ENCODE measurements at regions of chr14 and their contacts with region 1.

Region 1: GRCh38 chr14:75709207-75709812 is 48.3 kb downstream of the TTLL5 start:
- DNase-seq: no peak
- H3K4me3 ChIP-seq: no peak overlapping the region
- H3K27ac ChIP-seq: no peak overlapping the region
- H3K4me1 ChIP-seq: peaks cover 10 to 22% (median 19%) of the 10 kb centered on the region in 4 donors
- H3K27me3 ChIP-seq: no peaks in the 10 kb centered on the region
- CTCF ChIP-seq: peak; percentile 79 to 86 (median 82)
- EP300 ChIP-seq: no peak
- POLR2A ChIP-seq: no peak

Region 2: DNA sequence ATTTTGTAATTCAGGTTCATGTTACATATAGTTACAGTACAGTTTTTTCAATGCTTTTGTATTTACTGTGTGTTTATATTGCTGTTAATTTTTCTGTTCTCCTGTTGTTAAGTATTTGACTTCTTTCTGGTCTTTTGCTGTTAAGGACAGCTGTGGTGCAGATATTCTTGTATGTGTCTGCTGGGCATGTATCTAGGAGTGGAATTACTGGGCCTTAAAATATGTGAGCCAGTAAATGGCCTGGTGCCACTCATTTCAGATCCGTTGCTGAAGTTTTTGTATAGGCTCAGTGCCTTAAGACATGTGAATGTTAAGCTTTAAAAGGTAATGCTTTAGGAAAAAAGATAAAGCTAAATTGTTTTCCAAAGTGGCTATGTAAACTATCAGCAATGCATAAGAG is 39.0 kb after region 1 on chr14:
- intact Hi-C with region 1: no loop called
- DNase-seq: no peak
- H3K4me3 ChIP-seq: no peak overlapping the region
- H3K27ac ChIP-seq: no peak overlapping the region
- H3K4me1 ChIP-seq: no peaks in the 10 kb centered on the region
- H3K27me3 ChIP-seq: no peaks in the 10 kb centered on the region
- CTCF ChIP-seq: no peak
- EP300 ChIP-seq: no peak
- POLR2A ChIP-seq: no peak

Region 3: GRCh38 chr14:75794615-75795038 is 85.3 kb after region 1 on chr14:
- intact Hi-C with region 1: loop called (anchors 5 kb)
- DNase-seq: no peak
- H3K4me3 ChIP-seq: no peak overlapping the region
- H3K27ac ChIP-seq: peak overlapping the region in 1 of 4 donors; percentile 33
- H3K4me1 ChIP-seq: peaks cover 0 to 12% (median 5%) of the 10 kb centered on the region in 4 donors
- H3K27me3 ChIP-seq: no peaks in the 10 kb centered on the region
- CTCF ChIP-seq: peak; percentile 51 to 62 (median 53)
- EP300 ChIP-seq: no peak
- POLR2A ChIP-seq: no peak

Region 4: GRCh38 chr14:75906676-75907280 is 197.5 kb after region 1 on chr14:
- intact Hi-C with region 1: loop called (anchors 5 kb)
- DNase-seq: peak; percentile 93
- H3K4me3 ChIP-seq: no peak overlapping the region
- H3K27ac ChIP-seq: peak overlapping the region in 3 of 4 donors; percentile 3 to 13 (median 4)
- H3K4me1 ChIP-seq: peaks cover 8 to 17% (median 11%) of the 10 kb centered on the region in 4 donors
- H3K27me3 ChIP-seq: no peaks in the 10 kb centered on the region
- CTCF ChIP-seq: peak; percentile 81 to 90 (median 86)
- EP300 ChIP-seq: no peak
- POLR2A ChIP-seq: no peak

Region 5: DNA sequence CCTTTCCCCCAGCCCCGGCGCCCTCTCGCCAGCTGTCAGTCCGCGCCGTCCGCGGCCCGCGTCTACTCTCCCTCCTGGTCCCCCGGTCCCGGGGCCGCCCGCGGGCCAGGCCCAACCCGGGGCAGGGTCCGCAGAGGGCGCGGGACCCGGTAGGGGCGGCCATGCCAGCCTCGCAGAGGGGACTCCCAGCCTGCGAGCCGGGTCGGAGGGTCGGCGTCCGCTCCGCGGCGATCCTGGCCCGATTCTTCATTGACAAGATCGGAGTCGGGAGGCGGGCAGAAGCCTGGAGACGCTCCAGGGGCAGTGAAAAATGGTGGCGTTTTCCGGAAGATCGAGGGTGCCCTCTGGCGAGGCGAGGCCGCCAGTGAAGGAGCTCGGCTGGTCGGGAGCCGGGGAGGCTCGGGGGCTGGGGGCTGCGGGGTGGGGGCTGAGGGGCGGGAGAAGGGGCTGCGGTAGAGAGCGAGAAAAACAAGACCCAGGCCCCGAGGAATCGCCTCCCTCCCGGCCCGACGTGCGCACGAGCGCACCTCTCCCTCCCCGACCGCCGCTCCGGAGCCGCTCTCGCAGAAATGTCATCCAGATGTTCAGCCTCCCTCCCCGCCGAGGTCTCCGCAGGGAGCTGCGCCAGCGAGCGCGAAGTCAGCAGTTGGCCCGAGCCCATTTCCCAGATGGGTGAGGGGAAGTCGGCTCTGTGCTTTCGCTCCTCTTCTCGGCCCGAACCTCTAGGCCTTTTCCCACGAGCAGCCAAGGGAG is 273.1 kb after region 1 on chr14:
- intact Hi-C with region 1: loop called (anchors 2 kb)
- DNase-seq: peak; percentile 98
- H3K4me3 ChIP-seq: peak overlapping the region; percentile 75 to 92 (median 80)
- H3K27ac ChIP-seq: peak overlapping the region; percentile 96 to 99 (median 98)
- H3K4me1 ChIP-seq: peaks cover 45 to 74% (median 71%) of the 10 kb centered on the region in 4 donors
- H3K27me3 ChIP-seq: no peaks in the 10 kb centered on the region
- CTCF ChIP-seq: peak; percentile 51 to 85 (median 80)
- EP300 ChIP-seq: no peak
- POLR2A ChIP-seq: no peak

Region 6: DNA sequence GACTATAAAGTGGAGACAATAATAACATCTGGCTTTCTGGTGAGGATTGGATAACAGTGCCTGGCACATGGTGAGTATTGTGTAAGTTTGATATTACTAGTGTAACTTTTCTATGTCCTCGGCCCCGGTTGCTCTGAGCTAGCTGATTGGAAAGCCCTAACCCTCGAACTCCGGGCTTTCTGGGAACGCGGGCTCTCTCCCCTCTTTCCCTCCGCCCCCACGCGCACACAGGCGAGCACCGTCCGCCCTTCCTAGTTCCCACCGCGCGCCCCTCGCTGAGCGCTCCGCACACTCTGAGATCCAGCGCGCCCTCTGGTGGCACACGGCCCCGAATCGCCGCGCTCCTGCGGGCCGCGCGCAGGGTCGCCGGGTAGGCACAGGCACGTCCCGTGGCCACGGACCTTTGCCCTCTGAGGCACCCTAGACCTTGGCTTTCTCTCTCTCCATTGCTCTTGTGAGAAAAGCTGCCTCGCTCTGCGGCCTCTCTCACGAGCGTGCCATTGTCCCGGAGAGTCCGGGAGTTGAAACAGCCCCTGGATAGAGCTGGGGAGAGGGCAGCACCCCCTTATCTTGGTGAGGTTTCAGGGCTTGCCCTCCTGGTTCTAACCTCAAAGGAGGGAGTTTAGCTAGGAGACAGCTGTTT is 643.5 kb after region 1 on chr14:
- intact Hi-C with region 1: loop called (anchors 10 kb)
- DNase-seq: no peak
- H3K4me3 ChIP-seq: peak overlapping the region; percentile 40 to 52 (median 40)
- H3K27ac ChIP-seq: no peak overlapping the region
- H3K4me1 ChIP-seq: peaks cover 8 to 9% (median 8%) of the 10 kb centered on the region in 4 donors
- H3K27me3 ChIP-seq: peaks cover 0 to 38% (median 0%) of the 10 kb centered on the region in 4 donors
- CTCF ChIP-seq: peak; percentile 77 to 89 (median 86)
- EP300 ChIP-seq: no peak
- POLR2A ChIP-seq: no peak

Measured in esophagus muscularis mucosa (tissue), 4 donors.